GM13977 (cell line): ENCODE measurements at regions of chr15 and their contacts with region 1.

Region 1: GRCh38 chr15:90320061-90320884 is 31.8 kb upstream of the ZNF774 start:
- DNase-seq: peak; percentile 84
- CTCF ChIP-seq: peak; percentile 95

Region 2: DNA sequence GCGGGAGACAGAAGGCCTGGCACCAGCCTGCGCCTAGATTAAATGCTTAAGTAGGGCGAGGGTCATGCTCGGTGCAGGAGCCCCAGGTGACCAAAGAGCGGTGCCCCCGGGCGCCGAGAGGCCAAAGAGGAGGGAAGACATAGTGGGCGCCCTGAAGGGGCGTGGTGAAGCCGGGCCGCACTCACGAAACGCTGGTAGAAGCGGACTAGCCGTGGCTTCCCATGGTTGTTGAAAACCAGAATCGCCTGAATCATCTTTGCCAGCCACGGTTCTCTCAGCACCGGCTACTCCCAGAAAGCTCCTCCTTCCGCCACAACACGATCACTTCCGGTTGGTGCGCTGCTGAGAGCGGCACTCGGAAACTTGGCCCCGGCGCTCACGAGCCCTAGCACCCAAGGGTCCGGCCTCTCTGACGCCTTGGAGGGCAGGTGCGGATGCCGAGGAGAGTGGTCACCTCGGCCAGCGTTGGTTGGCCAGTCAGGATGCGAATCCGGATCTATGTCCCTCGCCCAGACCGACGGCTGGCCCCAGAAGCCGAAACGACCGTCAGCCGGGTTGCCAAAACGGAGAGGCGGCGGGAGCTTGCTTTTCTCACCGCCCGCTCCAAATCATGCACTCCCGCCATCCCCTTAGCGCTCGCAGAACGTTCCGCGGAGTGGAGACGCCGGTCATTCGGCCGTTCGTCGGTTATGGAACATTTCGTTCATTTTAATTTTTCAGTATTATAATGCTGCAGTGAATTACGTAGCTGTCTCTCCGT is 426.4 kb before region 1 on chr15 and contains the start of gene AP3S2:
- in situ Hi-C with region 1: no loop called
- DNase-seq: peak; percentile 83
- CTCF ChIP-seq: no peak

Region 3: GRCh38 chr15:90478981-90479481 is 158.8 kb after region 1 on chr15:
- in situ Hi-C with region 1: loop called (anchors 10 kb)
- DNase-seq: no peak
- CTCF ChIP-seq: no peak

Region 4: GRCh38 chr15:90620379-90621067 is 300.2 kb after region 1 on chr15:
- in situ Hi-C with region 1: loop called (anchors 10 kb)
- DNase-seq: peak; percentile 77
- CTCF ChIP-seq: no peak

Region 5: DNA sequence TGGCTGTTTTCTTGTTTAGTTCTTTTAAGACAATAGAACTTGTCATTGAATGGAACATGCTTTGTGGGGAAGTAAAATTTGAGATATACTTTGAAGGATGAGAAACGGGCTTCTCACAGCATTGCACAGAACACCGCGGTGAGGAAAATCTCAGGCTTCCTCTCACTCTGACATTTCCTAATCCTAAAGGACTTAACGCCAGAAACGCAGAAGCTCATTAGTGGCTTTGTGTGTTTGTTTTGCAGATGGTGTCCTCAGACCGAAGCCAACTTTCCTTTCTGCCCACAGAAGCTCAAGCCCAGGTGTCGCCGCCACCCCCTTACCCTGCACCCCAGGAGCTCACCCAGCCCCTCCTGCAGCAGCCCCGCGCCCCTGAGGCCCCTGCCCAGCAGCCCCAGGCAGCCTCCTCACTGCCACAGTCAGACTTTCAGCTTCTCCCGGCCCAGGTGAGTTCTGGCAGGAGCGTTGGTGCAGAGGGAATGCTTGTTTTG is 318.0 kb after region 1 on chr15:
- in situ Hi-C with region 1: no loop called
- DNase-seq: no peak
- CTCF ChIP-seq: no peak

Region 6: GRCh38 chr15:90808517-90809235 is 488.4 kb after region 1 on chr15:
- in situ Hi-C with region 1: no loop called
- DNase-seq: no peak
- CTCF ChIP-seq: no peak

Region 7: DNA sequence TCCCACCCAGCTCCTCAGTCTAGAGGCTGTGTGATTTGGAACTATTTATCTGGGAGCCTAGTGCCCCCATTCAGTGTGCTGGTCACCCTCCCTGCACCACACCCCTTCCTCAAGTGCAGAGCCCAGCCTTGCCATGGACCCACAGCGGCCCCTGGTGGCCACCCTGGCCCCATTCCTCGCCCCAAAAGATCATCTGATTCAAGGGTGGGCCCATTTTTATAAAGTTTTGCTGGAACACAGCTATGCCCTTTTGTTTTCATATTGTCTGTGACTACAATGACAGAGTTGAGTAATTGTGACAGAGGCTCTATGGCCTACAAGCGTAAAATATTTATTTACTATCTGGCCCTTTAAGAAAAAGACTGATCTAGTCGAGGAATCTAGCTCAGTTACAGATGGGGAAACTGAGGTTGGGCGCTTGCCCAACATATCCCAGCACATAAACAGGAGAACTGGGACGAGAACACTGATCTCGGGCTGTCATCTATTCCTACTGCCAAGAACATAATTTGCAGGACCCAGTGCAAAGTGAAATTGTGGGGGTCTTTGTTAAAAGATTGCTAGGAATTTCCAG is 565.9 kb after region 1 on chr15:
- in situ Hi-C with region 1: loop called (anchors 25 kb)
- DNase-seq: peak; percentile 81
- CTCF ChIP-seq: peak; percentile 96